Left ventricle myocardium superior (tissue), 1 donor: ENCODE measurements at regions of chr12 and their contacts with region 1.

Region 1: DNA sequence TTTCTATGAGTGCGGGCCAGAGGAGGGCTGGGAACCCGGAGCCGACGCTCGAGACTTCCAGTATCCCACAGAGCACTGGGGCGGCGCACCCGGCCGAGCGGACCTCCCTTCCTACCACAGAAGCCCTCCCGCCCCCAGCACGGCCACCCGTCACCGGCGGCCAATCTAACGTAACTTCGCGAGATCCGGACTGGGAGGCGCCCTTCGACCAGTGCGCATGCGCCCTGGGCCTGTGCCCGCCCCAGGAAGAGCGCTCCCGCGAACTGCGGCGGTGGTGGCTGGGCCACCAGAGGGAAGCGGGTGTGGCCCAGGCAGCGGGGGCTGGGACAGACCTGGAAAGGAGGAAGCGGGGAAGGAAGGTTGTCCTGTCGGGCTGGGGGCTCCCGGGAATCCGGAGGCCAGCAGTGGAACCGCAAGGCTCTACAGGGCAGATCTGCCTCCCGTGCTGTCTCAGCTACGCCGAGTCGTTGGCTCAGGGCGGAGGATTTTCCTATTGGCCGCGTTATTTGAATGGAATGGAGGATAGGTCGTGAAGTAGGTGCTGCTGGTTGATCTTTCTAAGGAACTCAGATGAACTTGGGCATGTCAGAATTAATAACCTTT is at the start of gene PPP1R12A:
- DNase-seq: peak; percentile 98
- ATAC-seq: peak; percentile 99
- total RNA-seq, gene PPP1R12A: 40.7 TPM

Region 2: GRCh38 chr12:79811351-79811750 is 123.8 kb before region 1 on chr12:
- intact Hi-C with region 1: loop called (anchors 10 kb)
- DNase-seq: no peak
- ATAC-seq: no peak

Region 3: DNA sequence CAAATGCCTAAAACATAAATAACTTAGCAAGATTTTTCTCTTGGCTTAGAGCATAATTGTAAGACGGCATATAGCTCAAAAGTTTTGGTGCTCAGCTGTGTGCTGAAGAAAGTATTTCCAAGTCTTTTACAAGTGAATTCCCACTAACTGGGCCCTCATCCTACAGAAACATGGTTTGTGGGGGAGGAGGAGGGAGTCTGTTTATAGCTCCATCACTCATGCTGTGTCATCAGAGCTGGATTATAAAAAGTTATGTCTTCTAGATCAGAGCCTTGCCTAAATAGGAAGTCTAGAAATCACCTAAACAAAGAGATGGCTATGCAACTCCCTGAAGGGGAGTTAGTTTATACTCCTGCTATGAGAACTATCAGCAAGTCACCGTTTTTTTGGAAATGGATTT is 98.3 kb after region 1 on chr12:
- intact Hi-C with region 1: no loop called
- DNase-seq: no peak
- ATAC-seq: peak; percentile 33

Region 4: GRCh38 chr12:80186727-80187217 is 251.7 kb after region 1 on chr12:
- intact Hi-C with region 1: loop called (anchors 10 kb)
- DNase-seq: no peak
- ATAC-seq: peak; percentile 91